Activated B cell treated with CpG ODN at 0.5 μM for 24 hours (primary cell): ENCODE measurements at regions of chr1 and their contacts with region 1.

Region 1: DNA sequence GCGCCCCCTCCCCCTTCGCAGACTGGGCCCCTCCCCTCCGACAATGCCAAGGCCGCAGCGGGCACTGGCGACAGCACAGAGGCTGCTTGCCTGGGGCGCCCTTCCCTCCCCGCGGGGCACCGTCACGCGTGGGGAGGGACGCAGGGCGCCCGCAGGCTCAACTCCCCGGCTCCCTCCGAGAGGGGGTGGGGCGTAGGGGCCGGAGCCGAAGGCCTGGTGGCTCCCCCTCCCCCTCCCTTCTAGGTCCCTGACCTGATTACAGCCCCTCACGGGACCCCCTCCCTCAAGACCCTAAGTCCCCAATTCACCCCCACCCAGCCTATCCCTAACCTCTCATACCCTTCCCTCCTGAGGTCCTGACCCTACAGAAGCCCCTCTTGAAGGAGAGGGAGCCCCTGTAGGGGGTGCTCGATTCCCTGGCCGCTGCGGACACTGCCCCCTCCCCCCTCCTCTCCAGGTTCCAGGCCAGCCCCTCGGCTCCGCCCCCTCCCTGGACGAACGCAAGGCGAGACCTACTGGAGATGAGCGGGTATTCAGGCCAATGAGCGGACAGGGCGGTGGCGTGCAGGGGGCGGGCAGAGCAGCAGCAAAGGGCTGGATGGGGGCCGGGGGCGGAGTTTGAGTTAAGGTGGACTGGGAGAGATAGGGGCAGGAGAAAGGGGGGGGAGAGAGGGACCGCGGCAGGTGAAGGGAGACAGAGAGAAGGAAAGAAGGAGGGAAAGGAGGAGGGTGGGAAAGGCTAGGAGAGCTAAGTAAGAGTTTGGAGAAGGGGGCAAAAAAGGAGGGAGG is 733 bp upstream of the ZBTB7B start:
- DNase-seq: peak; percentile 94
- ATAC-seq: peak; percentile 81
- H3K4me3 Mint-ChIP-seq: peak overlapping the region; percentile 94
- H3K27ac Mint-ChIP-seq: peak overlapping the region; percentile 95
- H3K4me1 Mint-ChIP-seq: peaks cover 51% of the 10 kb centered on the region
- H3K27me3 Mint-ChIP-seq: no peaks in the 10 kb centered on the region
- CTCF ChIP-seq: no peak

Region 2: DNA sequence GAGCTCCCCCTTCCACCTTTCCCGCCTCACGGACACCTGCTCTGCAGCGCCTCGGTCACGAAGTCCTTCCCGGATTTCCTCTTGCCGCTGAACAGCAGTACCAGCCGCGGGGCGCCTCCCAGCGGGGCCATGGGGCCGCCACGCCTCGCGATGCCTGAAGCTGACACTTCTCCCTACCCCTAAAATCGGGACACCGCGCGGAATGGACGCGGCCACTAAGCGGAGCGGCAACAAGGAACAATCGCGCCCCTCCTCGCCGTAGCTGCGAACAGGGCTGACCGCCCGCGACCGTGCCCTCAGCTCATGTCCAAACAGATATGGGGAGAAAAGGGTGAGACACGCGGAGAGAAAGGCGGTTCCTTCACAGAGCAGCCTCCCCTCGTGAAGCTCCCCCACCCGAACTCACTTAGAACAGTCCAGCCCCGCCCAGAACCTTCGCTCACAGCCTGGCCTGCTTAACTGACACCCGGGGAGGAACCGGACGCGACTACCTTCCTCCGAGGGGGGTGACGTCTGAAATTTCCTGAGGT is 65.2 kb before region 1 on chr1 and contains the start of gene PMVK:
- CTCF ChIA-PET with region 1: interaction called, 3 read pairs
- POLR2A ChIA-PET with region 1: interaction called, 17 read pairs
- intact Hi-C with region 1: loop called (anchors 1 kb)
- DNase-seq: peak; percentile 90
- ATAC-seq: peak; percentile 90
- H3K4me3 Mint-ChIP-seq: peak within 1 kb of the TSS; percentile 98
- H3K27ac Mint-ChIP-seq: peak within 1 kb of the TSS; percentile 100
- H3K4me1 Mint-ChIP-seq: peaks cover 58% of the 10 kb centered on the region
- H3K27me3 Mint-ChIP-seq: no peaks in the 10 kb centered on the region
- CTCF ChIP-seq: no peak
- total RNA-seq, gene PMVK: 24.6 and 26.3 TPM in 2 replicates

Region 3: DNA sequence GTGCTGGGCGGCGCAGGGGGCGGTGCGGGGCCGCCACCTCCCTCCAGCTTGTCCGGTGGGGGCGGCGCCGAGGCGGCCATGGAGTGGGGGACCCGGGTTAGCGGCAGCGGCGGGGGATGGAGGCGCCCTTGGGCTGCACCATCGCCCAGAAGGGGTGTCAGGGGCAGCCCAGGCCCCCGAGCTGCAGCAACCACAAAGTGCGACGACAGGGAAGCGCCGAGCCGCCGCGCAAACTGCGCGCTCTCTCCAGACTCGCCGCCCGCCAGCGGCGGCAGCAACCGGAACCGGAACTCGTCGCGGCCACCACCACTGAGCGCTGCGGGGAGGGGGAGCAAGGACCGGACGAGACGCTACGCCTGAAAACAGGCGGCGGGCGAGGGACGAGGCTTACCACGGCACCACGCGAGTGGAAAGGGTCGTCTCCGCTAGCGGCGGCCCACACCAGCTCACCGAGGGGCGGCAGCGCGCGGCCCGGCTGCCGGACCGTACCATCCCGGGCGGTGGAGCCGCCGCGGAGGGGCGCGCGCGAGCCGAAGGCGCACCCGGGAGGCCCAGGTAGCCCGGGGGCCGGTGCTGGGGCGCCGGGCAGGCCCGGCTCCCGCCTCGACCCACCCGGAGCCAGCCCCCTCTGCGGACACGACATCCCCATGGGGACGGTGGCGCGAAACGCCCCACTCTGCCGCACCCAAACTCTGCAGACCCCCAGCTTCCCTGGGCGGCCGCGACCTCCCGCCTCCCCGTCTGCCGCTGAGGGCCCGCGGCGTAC is 40.2 kb before region 1 on chr1 and contains the start of gene PYGO2:
- CTCF ChIA-PET with region 1: interaction called, 11 read pairs
- POLR2A ChIA-PET with region 1: interaction called, 11 read pairs
- intact Hi-C with region 1: loop called (anchors 1 kb)
- DNase-seq: peak; percentile 85
- ATAC-seq: peak; percentile 88
- H3K4me3 Mint-ChIP-seq: peak within 1 kb of the TSS; percentile 87
- H3K27ac Mint-ChIP-seq: peak within 1 kb of the TSS; percentile 86
- H3K4me1 Mint-ChIP-seq: peaks cover 45% of the 10 kb centered on the region
- H3K27me3 Mint-ChIP-seq: no peaks in the 10 kb centered on the region
- CTCF ChIP-seq: no peak
- total RNA-seq, gene PYGO2: 33.1 and 38.1 TPM in 2 replicates

Region 4: GRCh38 chr1:154982897-154983648 is 18.8 kb before region 1 on chr1 and contains the start of gene FLAD1:
- CTCF ChIA-PET with region 1: interaction called, 17 read pairs
- POLR2A ChIA-PET with region 1: interaction called, 32 read pairs
- intact Hi-C with region 1: loop called (anchors 1 kb)
- DNase-seq: peak; percentile 81
- ATAC-seq: peak; percentile 100
- H3K4me3 Mint-ChIP-seq: no peak within 1 kb of the TSS
- H3K27ac Mint-ChIP-seq: no peak within 1 kb of the TSS
- H3K4me1 Mint-ChIP-seq: peaks cover 9% of the 10 kb centered on the region
- H3K27me3 Mint-ChIP-seq: no peaks in the 10 kb centered on the region
- CTCF ChIP-seq: no peak
- total RNA-seq, gene FLAD1: 64.1 and 69.0 TPM in 2 replicates

Region 5: DNA sequence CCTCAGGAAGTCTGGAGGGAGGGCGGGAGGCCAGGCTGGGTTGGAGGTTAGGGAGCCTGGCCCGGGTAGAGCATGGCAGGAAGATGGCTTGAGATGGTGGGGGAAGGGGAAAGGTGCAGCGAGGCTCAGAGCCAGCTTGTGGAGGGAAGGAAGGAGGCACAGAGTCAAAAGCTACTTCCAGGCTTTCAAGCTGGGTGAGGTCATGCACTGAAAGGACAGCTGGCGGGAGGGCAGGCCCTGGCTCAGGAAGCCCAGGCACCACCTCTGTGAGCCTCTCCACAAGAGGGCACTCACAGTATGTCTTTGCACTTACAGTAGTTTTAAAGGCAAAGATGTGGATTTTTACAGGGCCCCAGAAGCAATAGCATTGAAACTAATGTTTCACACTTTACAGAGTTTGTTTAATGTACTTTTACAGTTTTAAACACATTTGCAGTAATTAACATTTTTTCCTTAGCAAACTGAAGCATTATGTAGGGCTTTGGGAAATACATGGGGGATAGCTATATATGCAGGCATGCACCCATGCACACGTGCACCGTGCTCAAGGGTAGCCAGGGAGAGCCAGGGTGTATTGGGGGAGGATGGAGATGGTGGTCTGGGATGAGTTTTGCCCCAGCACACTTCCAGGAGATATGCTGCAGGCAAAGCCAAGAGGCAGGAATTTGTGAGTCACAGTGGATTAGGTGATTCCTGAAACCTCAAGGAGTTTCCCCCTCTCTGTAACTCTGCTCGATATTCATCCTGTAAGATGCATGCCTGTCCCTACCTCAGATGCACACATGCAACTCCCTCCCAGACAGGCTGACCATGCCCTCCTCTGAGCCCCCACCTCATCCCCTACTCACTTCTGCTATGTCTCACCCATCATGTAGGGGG is 43.2 kb after region 1 on chr1:
- CTCF ChIA-PET with region 1: interaction called, 11 read pairs
- POLR2A ChIA-PET with region 1: no interaction called
- intact Hi-C with region 1: no loop called
- DNase-seq: peak; percentile 22
- ATAC-seq: peak; percentile 96
- H3K4me3 Mint-ChIP-seq: no peak overlapping the region
- H3K27ac Mint-ChIP-seq: no peak overlapping the region
- H3K4me1 Mint-ChIP-seq: peaks cover 4% of the 10 kb centered on the region
- H3K27me3 Mint-ChIP-seq: no peaks in the 10 kb centered on the region
- CTCF ChIP-seq: peak; percentile 58